ENCODE measurements at regions of chr19 and their contacts with region 1.

Region 1: GRCh38 chr19:3970808-3971598 is at the start of gene DAPK3:
- DNase-seq: peak; percentile 97
- CTCF ChIP-seq: no peak

Region 2: GRCh38 chr19:3955688-3956087 is 15.3 kb before region 1 on chr19:
- CTCF ChIA-PET with region 1: interaction called, 12 read pairs
- POLR2A ChIA-PET with region 1: interaction called, 3 read pairs
- DNase-seq: no peak
- CTCF ChIP-seq: no peak

Region 3: GRCh38 chr19:3984908-3985642 is 14.1 kb after region 1 on chr19 and contains the start of gene EEF2:
- CTCF ChIA-PET with region 1: interaction called, 5 read pairs
- POLR2A ChIA-PET with region 1: interaction called, 29 read pairs
- DNase-seq: peak; percentile 93
- CTCF ChIP-seq: no peak